A549 (cell line): ENCODE measurements at regions of chr19 and their contacts with region 1.

Region 1: GRCh38 chr19:18865973-18866799 is 29.8 kb downstream of the CERS1 start:
- DNase-seq: peak; percentile 52 to 58
- ATAC-seq: peak; percentile 85 to 94
- H3K4me3 ChIP-seq: no peak overlapping the region
- H3K27ac ChIP-seq: no peak overlapping the region
- H3K4me1 ChIP-seq: no peaks in the 10 kb centered on the region
- CTCF ChIP-seq: peak; percentile 85
- EP300 ChIP-seq: no peak
- POLR2A ChIP-seq: no peak
- RAD21 ChIP-seq: peak; percentile 36 to 45; a peak in 3 of 5 replicates

Region 2: GRCh38 chr19:18879579-18880373 is 13.6 kb after region 1 on chr19:
- CTCF ChIA-PET with region 1: interaction called, 21 read pairs
- POLR2A ChIA-PET with region 1: no interaction called
- DNase-seq: peak in 1 of 2 experiments; percentile 64
- ATAC-seq: peak; percentile 70 to 76
- H3K4me3 ChIP-seq: no peak overlapping the region
- H3K27ac ChIP-seq: no peak overlapping the region
- H3K4me1 ChIP-seq: no peaks in the 10 kb centered on the region
- CTCF ChIP-seq: no peak
- EP300 ChIP-seq: no peak
- POLR2A ChIP-seq: no peak
- RAD21 ChIP-seq: no peak